ENCODE measurements at regions of chr9 and their contacts with region 1.

Region 1: DNA sequence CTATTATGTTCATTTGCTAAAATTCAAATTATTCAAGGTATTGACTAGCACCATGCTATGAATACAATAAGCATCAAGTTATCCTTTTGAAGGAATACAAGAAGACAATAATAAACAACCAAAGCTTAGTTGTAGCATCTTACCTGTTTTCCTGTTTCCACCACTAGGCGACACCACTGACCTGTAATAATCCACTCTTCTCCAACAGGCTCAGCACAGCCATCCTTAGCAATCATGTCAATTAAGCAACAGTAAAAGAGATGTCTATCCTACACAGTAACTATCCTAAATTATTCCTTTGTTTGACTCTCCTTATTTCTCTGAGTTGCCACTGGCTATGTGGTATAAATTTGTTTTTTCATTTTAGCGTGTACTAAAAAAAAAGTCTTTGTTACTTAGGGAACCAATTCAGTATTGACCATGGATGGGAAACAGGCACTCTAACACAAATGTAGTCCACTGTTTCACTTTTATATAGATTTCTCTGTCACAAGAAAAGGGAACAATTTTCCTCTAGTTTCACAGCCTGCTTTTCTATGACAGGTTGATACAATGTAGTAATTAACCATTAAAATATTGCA is 46.2 kb downstream of the PCA3 start:
- DNase-seq: peak; percentile 12 to 15
- ATAC-seq: peak; percentile 64 to 68
- H3K4me3 ChIP-seq: no peak overlapping the region
- H3K27ac ChIP-seq: no peak overlapping the region
- H3K4me1 ChIP-seq: no peaks in the 10 kb centered on the region
- H3K27me3 ChIP-seq: peaks cover 0 to 2% (median 0%) of the 10 kb centered on the region in 3 donors
- CTCF ChIP-seq: peak; percentile 54 to 73 (median 68)
- POLR2A ChIP-seq: no peak

Region 2: DNA sequence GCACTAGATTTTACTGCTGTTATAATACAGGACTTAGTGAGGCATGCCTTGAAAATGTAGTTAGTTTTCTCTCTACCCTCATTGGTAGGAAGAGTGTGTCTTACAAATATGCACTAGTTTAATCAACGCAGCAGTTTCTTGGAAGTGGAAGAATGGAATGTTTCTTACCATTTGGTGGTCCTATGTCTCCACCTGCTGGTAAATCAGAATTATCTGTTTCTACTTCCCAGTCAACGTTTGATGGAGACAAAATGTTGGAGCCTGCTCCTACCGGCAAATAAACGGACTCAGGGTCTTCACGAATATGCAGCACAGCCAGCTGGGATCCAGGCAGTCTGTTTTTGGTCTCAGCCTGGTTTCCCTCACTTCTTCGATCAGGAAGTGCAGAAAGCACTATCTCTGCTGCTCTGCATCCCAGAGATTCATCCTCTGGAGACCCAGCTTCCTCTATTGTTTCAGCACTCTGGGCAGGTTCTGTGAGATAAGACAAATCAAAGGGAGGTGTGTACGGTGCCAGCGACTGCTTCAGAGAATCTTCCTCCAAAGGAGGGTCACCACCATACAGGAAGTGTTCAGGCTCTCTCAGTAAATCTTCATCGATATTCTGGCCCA is 105.8 kb before region 1 on chr9:
- in situ Hi-C with region 1: no loop called
- intact Hi-C with region 1: no loop called
- DNase-seq: no peak
- ATAC-seq: peak in 1 of 2 donors; percentile 58
- H3K4me3 ChIP-seq: no peak overlapping the region
- H3K27ac ChIP-seq: no peak overlapping the region
- H3K4me1 ChIP-seq: no peaks in the 10 kb centered on the region
- H3K27me3 ChIP-seq: peaks cover 0 to 5% (median 0%) of the 10 kb centered on the region in 3 donors
- CTCF ChIP-seq: peak; percentile 20 to 68 (median 52)
- POLR2A ChIP-seq: no peak

Region 3: DNA sequence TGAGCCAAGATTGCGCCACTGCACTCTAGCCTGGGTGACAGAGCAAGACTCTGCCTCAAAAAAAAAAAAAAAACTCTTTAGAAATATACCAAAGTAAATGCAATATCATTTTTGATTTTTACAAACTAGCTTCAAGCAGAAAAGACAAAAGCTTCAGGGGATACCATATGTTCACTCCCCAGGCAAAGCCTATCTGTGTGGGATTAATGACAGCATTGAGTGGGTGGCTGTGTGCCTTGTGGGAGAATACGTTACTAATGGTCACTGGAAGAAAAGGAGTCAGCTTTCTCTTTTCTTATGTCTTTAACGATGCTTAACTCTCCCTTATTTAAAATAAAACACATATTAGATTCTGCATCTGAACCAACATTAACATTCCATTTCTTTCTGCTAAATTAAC is 44.3 kb before region 1 on chr9:
- in situ Hi-C with region 1: no loop called
- intact Hi-C with region 1: no loop called
- DNase-seq: no peak
- ATAC-seq: no peak
- H3K4me3 ChIP-seq: no peak overlapping the region
- H3K27ac ChIP-seq: no peak overlapping the region
- H3K4me1 ChIP-seq: no peaks in the 10 kb centered on the region
- H3K27me3 ChIP-seq: no peaks in the 10 kb centered on the region
- CTCF ChIP-seq: no peak
- POLR2A ChIP-seq: no peak

Region 4: DNA sequence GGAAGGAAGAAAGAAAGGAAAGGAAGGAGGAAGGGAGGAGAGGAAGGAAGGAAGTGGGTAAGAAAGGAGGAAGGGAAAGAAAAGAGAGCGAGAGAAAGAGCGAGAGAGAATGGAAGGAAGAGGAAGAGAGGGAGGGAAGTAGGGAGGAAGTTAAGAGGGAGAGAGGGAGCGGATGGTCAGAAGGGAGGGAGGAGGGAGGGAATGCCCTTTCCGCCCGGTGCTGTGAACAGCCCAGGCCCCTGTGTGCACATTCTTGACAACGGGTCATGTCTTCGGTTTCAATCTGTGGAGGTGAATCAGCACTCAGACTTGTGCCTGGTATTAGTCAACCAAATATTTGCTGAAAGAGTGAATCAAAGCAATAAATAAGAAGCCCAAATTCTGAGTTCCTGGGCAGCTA is 56.2 kb after region 1 on chr9:
- in situ Hi-C with region 1: no loop called
- intact Hi-C with region 1: no loop called
- DNase-seq: no peak
- ATAC-seq: no peak
- H3K4me3 ChIP-seq: no peak overlapping the region
- H3K27ac ChIP-seq: no peak overlapping the region
- H3K4me1 ChIP-seq: no peaks in the 10 kb centered on the region
- H3K27me3 ChIP-seq: no peaks in the 10 kb centered on the region
- CTCF ChIP-seq: no peak
- POLR2A ChIP-seq: no peak

Region 5: DNA sequence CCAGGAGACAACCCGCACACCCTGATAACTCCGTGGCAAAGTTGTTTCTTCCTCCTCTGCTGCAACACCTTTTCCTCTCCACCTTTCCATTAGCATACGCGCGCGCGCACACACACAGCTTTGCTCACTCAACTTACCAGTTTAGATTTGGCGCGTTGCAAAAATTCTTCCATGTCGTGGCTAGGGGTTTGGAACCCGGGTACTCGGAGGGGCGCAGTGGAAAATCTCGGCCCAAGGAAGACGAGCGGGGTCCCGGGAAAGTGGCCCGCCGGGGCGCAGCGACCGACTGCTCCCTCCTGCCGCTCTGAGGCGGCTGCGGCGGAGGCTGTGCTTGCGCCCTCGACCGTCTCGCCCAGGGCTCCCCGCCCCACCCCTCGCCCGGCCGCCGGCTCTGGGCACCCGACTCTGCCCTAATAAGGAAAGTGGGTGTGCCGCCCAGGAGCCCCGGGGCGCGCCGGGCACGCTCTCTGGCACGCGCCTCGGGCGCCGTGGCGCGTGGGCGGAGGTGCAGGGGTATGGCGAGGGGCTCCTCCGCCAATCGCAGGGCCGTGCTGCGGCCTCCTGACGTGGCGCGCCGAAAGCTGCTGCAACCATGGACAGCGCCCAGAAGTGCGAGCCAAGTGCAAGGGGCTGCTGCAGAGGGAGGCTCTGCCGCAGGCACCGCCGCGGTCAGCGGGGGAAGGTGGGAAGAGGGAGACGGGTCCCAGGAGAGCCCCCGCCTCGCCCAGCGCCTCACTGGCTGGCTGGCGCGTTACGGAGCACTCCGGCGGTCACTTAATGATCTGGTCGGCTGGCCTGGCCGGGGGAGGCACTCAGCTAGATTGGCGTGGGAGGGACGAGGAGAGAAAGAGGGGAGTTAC is 95.6 kb after region 1 on chr9 and contains the start of gene PRUNE2:
- in situ Hi-C with region 1: no loop called
- intact Hi-C with region 1: loop called (anchors 10 kb)
- DNase-seq: peak in 1 of 2 donors; percentile 34
- ATAC-seq: peak; percentile 30 to 65
- H3K4me3 ChIP-seq: peak within 1 kb of the TSS; percentile 45 to 61 (median 49)
- H3K27ac ChIP-seq: peak within 1 kb of the TSS in 3 of 4 donors; percentile 3 to 56 (median 22)
- H3K4me1 ChIP-seq: peaks cover 12 to 18% of the 10 kb centered on the region in 2 donors
- H3K27me3 ChIP-seq: no peaks in the 10 kb centered on the region
- CTCF ChIP-seq: no peak
- POLR2A ChIP-seq: peak; percentile 55 to 70
- total RNA-seq, gene PRUNE2: 1.6 to 43.5 (median 11.0) TPM

Region 6: GRCh38 chr9:76987594-76988200 is 177.2 kb after region 1 on chr9:
- in situ Hi-C with region 1: loop called in 2 of 4 experiments (anchors 10 to 25 kb)
- intact Hi-C with region 1: loop called (anchors 2 kb)
- DNase-seq: no peak
- ATAC-seq: no peak
- H3K4me3 ChIP-seq: no peak overlapping the region
- H3K27ac ChIP-seq: no peak overlapping the region
- H3K4me1 ChIP-seq: no peaks in the 10 kb centered on the region
- H3K27me3 ChIP-seq: peaks cover 3 to 6% (median 4%) of the 10 kb centered on the region in 3 donors
- CTCF ChIP-seq: peak in 3 of 5 experiments; percentile 23 to 38 (median 33)
- POLR2A ChIP-seq: no peak

Region 7: GRCh38 chr9:77000330-77000729 is 189.9 kb after region 1 on chr9:
- in situ Hi-C with region 1: loop called in 2 of 4 experiments (anchors 5 to 25 kb)
- intact Hi-C with region 1: no loop called
- DNase-seq: no peak
- ATAC-seq: no peak
- H3K4me3 ChIP-seq: no peak overlapping the region
- H3K27ac ChIP-seq: no peak overlapping the region
- H3K4me1 ChIP-seq: no peaks in the 10 kb centered on the region
- H3K27me3 ChIP-seq: peaks cover 0 to 5% (median 3%) of the 10 kb centered on the region in 3 donors
- CTCF ChIP-seq: no peak
- POLR2A ChIP-seq: no peak

Region 8: DNA sequence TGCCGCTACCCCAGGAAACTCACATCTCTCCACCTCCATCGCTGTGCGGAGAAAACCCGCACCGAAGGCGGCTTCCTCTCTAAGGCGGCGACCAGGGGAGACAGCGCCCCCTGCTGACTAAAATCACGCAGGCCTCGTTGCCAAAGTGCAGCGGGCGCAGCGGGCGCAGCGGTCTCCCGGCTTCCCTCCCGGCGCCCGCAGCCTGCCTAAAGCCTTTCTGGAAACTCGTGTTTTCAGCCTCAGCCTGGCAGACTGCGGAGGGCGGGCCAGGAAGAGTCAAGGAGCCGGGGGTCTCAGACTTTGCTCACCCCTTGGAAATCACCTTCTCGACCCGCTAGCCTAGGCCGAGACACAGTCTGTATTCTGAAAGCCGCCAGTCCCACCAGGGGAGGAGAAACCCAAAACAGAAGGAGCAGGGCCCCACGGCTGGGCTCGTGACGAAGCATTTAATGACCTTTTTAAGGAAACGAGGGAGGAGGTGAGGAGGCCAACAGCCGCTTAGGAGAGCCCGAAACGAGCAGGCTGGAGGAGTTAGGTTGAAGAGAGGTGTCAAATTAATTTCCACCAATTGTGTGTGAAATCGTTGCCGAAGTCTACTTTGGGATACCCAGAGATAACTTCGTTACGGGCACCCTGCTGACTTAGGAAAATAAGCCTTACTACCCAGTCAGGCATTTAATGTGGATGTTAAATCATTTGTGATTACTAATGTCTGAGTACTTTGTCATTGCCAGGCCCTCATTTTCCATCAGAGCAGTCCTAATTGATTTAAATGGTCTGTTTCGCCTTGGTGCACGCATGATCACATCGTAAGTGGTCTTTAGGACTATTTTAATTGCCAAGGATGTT is 201.7 kb after region 1 on chr9:
- in situ Hi-C with region 1: no loop called
- intact Hi-C with region 1: loop called (anchors 5 kb)
- DNase-seq: peak in 1 of 2 donors; percentile 25
- ATAC-seq: peak; percentile 66 to 73
- H3K4me3 ChIP-seq: peak overlapping the region in 3 of 4 donors; percentile 7 to 39 (median 31)
- H3K27ac ChIP-seq: no peak overlapping the region
- H3K4me1 ChIP-seq: peaks cover 22 to 24% of the 10 kb centered on the region in 2 donors
- H3K27me3 ChIP-seq: peaks cover 80 to 95% (median 84%) of the 10 kb centered on the region in 3 donors
- CTCF ChIP-seq: peak; percentile 27 to 79 (median 71)
- POLR2A ChIP-seq: no peak

Region 9: GRCh38 chr9:77131399-77131798 is 320.9 kb after region 1 on chr9:
- in situ Hi-C with region 1: loop called in 2 of 4 experiments (anchors 25 kb)
- intact Hi-C with region 1: no loop called
- DNase-seq: no peak
- ATAC-seq: no peak
- H3K4me3 ChIP-seq: no peak overlapping the region
- H3K27ac ChIP-seq: no peak overlapping the region
- H3K4me1 ChIP-seq: no peaks in the 10 kb centered on the region
- H3K27me3 ChIP-seq: no peaks in the 10 kb centered on the region
- CTCF ChIP-seq: no peak
- POLR2A ChIP-seq: no peak

Region 10: DNA sequence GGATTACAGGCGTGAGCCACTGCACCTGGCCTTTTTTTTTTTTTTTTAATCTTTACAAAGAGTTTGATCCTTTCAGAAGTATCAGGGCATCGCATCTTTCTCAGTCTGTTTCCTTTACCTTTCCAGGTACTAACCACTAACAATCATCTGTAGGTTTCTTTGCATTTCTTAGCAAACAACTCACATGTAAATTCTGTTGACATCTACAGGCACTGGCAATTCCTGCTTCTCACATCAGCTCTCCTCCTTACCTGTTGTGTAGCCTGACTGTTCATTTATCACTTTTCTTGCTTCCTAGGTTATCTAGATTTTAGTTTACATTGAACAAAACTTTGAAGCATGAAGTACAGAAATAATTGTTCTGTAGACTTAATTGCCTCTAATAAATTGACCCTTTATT is 339.4 kb after region 1 on chr9:
- in situ Hi-C with region 1: loop called in 2 of 4 experiments (anchors 25 kb)
- intact Hi-C with region 1: loop called (anchors 1 kb)
- DNase-seq: no peak
- ATAC-seq: no peak
- H3K4me3 ChIP-seq: no peak overlapping the region
- H3K27ac ChIP-seq: no peak overlapping the region
- H3K4me1 ChIP-seq: peaks cover 0 to 7% of the 10 kb centered on the region in 2 donors
- H3K27me3 ChIP-seq: no peaks in the 10 kb centered on the region
- CTCF ChIP-seq: no peak
- POLR2A ChIP-seq: no peak

Measured in gastrocnemius medialis (tissue), 4 donors.